HepG2 (cell line): ENCODE measurements at regions of chr4 and their contacts with region 1.

Region 1: GRCh38 chr4:48340965-48341775 is at the start of gene SLAIN2:
- DNase-seq: peak; percentile 91
- ATAC-seq: peak; percentile 95
- H3K4me3 ChIP-seq: peak within 1 kb of the TSS; percentile 88 to 99 (median 98)
- H3K27ac ChIP-seq: peak within 1 kb of the TSS; percentile 91
- H3K4me1 ChIP-seq: peaks cover 57% of the 10 kb centered on the region
- H3K27me3 ChIP-seq: no peaks in the 10 kb centered on the region; a peak in 1 of 5 replicates
- CTCF ChIP-seq: 0 out of 2 replicates have a peak, but pooled peaks have one; percentile 5
- EP300 ChIP-seq: no peak
- POLR2A ChIP-seq: peak; percentile 68 to 91
- RAD21 ChIP-seq: 0 out of 2 replicates have a peak, but pooled peaks have one; percentile 17
- total RNA-seq, gene SLAIN2: 20.0 and 20.7 TPM in 2 replicates

Region 2: DNA sequence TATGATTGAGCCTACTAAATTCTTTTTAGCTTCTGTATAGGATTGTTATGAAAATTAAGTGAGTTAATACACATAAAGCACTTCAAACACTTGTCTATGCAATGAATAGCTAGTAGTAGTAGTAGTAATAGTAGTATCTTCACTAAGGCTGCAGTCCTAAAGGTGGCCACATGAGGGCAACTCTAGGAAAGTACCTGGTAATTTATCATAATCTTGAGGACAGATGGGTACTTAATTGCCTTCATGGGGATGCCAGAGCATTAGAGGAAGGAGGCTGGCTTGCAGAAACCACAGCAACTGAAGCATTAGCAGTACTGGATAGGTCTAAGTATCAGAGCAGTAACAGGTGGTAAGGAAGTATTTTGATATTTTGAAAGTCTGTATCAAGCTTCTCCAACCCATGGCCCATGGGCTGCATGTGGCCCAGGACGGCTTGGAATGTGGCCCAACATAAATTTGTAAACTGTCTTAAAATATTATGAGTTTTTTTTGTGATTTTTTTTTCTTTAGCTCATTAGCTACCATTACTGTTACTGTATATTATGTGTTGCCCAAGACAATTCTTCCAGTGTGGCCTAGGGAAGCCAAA is 307.3 kb before region 1 on chr4:
- CTCF ChIA-PET with region 1: no interaction called
- POLR2A ChIA-PET with region 1: no interaction called
- in situ Hi-C with region 1: no loop called
- intact Hi-C with region 1: loop called (anchors 10 kb)
- DNase-seq: peak; percentile 28
- ATAC-seq: peak; percentile 72
- H3K4me3 ChIP-seq: no peak overlapping the region
- H3K27ac ChIP-seq: no peak overlapping the region
- H3K4me1 ChIP-seq: peaks cover 38% of the 10 kb centered on the region
- H3K27me3 ChIP-seq: no peaks in the 10 kb centered on the region
- CTCF ChIP-seq: peak; percentile 55
- EP300 ChIP-seq: no peak
- POLR2A ChIP-seq: no peak
- RAD21 ChIP-seq: no peak

Region 3: DNA sequence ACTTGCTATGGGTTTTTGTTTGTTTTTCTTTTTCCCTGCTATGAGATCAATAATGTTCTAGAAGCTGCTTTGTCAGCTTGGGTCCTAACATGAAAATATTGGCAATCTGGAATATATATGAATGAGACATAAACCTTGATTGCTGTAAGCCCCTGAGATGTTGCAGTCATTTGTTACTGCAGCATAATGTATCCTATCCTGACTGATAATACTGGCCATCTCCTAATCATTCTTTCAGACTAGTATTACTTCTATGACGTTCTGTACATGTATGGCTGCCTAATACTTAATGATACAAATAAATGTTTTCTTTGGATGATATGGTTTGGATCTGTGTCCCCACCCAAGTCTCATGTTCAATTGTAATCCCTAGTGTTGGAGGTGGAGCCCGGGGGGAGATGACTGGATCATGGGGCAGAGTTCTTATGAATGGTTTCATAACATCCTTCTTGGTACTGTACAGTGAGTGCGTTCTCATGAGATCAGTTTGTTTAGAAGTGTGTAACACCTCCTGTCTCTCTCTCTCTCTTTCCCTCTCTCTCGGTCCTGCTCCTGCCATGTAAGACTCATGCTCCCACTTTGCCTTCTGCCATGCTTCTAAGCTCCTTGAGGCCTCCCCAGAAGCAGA is 19.0 kb before region 1 on chr4:
- CTCF ChIA-PET with region 1: no interaction called
- POLR2A ChIA-PET with region 1: no interaction called
- in situ Hi-C with region 1: no loop called
- intact Hi-C with region 1: no loop called
- DNase-seq: no peak
- ATAC-seq: no peak
- H3K4me3 ChIP-seq: no peak overlapping the region
- H3K27ac ChIP-seq: no peak overlapping the region
- H3K4me1 ChIP-seq: no peaks in the 10 kb centered on the region
- H3K27me3 ChIP-seq: peaks cover 0 to 3% of the 10 kb centered on the region in 2 experiments; a peak in 2 of 5 replicates
- CTCF ChIP-seq: no peak
- EP300 ChIP-seq: no peak
- POLR2A ChIP-seq: no peak
- RAD21 ChIP-seq: no peak

Region 4: DNA sequence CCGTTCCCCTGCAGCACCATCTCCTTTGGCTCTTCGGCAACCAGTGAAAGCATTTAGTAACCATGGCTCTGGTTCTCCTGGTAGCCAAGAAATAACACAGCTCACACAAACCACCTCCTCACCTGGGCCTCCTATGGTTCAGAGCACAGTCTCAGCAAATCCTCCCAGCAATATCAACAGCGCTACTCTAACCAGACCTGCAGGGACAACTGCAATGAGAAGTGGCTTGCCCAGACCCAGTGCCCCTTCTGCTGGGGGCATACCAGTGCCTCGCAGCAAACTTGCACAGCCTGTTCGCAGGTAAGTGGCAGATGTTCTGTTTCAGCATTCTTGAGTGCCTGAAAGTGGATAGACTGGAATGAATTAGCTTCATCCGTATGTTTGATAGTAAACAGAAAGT is 79.0 kb after region 1 on chr4:
- CTCF ChIA-PET with region 1: no interaction called
- POLR2A ChIA-PET with region 1: no interaction called
- in situ Hi-C with region 1: no loop called
- intact Hi-C with region 1: loop called (anchors 1 kb)
- DNase-seq: no peak
- ATAC-seq: no peak
- H3K4me3 ChIP-seq: no peak overlapping the region
- H3K27ac ChIP-seq: no peak overlapping the region
- H3K4me1 ChIP-seq: no peaks in the 10 kb centered on the region
- H3K27me3 ChIP-seq: no peaks in the 10 kb centered on the region
- CTCF ChIP-seq: no peak
- EP300 ChIP-seq: no peak
- POLR2A ChIP-seq: no peak
- RAD21 ChIP-seq: no peak